Activated CD4-positive, alpha-beta memory T cell treated with anti-CD3 and anti-CD28 coated beads, Interleukin-2, amount 10 ng/mL, durations not matched to agents 7 days and 5 days (primary cell): ENCODE measurements at regions of chr7 and their contacts with region 1.

Region 1: DNA sequence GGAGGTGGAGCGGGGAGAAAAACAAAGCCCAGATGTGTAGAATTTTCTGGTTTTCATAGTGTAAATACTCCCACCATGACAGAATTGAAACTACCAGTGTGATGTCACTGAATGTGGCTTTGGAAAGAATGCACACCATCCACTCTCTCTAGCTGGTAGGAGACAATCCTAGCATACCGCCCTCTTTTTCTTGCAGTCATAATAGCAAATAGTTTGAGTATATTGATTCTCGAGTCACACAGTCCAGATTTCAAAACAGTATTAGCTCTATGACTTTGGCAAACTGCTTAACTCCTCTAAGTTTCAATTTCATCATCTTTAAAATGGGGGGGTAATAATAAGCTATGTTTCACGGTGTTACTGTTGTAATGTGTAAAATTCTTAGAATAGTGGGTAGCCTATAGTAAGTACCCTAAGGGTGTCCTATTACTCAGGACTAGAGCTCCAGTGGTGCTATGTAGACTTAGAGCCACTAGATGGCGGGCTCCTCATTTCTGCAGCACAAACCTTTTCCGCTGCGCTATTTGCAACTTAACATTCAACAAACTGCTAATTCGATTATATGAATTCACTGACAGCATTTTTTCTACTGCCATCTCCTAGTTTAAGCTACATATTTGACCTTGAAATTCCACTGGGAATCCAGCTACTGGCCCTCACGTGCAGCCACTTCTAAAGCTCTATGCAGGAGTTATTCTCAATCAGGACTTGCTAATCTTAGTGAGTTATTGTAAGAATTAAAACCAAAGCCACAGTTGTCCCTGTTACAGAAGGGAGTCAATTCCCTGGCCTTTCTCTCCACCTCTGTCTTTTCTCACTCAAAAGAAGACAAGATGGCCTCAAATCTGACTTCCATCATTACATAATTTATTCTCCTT is 18.7 kb downstream of the TAS2R40 start:
- DNase-seq: peak; percentile 77
- H3K4me3 Mint-ChIP-seq: no peak overlapping the region
- H3K27ac Mint-ChIP-seq: peak overlapping the region; percentile 33
- H3K4me1 Mint-ChIP-seq: peaks cover 52% of the 10 kb centered on the region
- H3K27me3 Mint-ChIP-seq: peaks cover 16% of the 10 kb centered on the region

Region 2: DNA sequence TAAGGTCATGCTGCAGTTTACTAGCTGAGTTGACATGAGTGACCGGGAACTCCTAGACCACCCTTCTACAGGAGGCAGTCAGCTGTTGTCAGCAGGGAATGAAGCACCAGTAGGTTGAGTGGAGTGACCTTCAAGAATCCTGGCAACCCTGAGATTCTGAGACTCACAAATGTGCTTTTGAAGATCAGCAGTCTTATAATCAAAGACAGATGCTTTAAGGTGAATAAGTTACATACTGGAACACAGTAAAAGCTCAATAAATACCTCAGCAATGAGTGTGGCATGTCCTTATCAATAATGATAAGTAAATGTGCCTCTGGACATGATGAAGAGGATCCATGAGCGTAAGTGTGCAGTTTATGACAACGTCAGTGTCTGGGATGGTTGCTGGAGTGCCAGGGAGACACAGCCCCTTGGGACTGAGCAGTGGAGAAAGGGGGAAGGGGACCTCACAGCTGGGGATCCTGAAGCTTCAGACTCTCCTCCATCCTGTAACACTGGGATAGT is 200.3 kb before region 1 on chr7:
- CTCF ChIA-PET with region 1: no interaction called
- POLR2A ChIA-PET with region 1: no interaction called
- DNase-seq: no peak
- H3K4me3 Mint-ChIP-seq: no peak overlapping the region
- H3K27ac Mint-ChIP-seq: no peak overlapping the region
- H3K4me1 Mint-ChIP-seq: no peaks in the 10 kb centered on the region
- H3K27me3 Mint-ChIP-seq: peaks cover 9% of the 10 kb centered on the region

Region 3: GRCh38 chr7:143263266-143264195 is 23.0 kb after region 1 on chr7 and contains the start of gene GSTK1:
- CTCF ChIA-PET with region 1: interaction called, 178 read pairs
- POLR2A ChIA-PET with region 1: interaction called, 51 read pairs
- DNase-seq: peak; percentile 86
- H3K4me3 Mint-ChIP-seq: peak within 1 kb of the TSS; percentile 97
- H3K27ac Mint-ChIP-seq: peak within 1 kb of the TSS; percentile 87
- H3K4me1 Mint-ChIP-seq: peaks cover 73% of the 10 kb centered on the region
- H3K27me3 Mint-ChIP-seq: no peaks in the 10 kb centered on the region
- total RNA-seq, gene GSTK1: 502 to 518 TPM

Region 4: DNA sequence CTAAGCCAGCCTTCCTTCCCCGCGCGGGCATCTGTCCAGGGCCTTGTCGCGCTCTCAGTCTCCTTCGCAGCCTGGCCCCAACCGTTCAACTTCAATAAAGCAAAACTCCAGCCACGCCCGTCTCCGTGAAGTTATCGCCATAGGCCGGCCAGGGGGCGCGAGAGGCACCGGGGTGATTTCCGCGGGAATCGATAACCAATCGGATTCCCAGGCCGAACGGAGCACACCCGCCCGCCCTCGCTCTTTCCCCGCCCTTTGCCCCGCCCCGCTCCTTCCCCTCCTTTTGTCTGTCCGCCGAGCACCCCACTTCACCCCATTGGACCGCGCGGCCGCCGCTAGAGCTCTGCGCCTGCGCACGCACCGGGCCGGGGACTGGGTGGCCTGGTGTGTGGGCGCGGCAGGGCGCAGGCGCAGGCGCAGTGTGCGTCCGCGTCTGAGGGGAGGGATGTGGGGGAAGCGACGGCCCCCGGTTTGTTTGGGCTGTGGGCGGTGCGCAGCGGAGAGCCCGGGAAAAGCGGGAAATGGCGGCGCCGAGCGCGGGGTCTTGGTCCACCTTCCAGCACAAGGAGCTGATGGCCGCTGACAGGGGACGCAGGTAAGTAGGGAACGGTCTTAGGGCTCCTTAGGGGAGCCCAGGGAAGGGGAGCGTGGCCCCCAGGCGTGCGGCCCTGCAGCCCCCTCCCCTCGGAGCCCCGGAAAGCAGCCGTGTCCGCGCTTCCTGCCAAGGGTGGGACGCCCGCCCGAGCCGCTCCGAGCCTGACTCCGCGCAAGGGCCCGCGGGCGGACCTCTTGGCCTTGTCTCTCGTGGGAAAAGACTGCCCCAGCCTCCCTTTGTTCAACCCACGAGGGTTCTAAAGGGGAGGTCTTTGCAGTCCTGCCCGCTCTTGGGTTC is 47.7 kb after region 1 on chr7 and contains the start of gene CASP2:
- CTCF ChIA-PET with region 1: interaction called, 250 read pairs
- POLR2A ChIA-PET with region 1: interaction called, 16 read pairs
- DNase-seq: peak; percentile 99
- H3K4me3 Mint-ChIP-seq: peak within 1 kb of the TSS; percentile 89
- H3K27ac Mint-ChIP-seq: peak within 1 kb of the TSS; percentile 82
- H3K4me1 Mint-ChIP-seq: peaks cover 55% of the 10 kb centered on the region
- H3K27me3 Mint-ChIP-seq: no peaks in the 10 kb centered on the region
- total RNA-seq, gene CASP2: 117 to 122 TPM

Region 5: GRCh38 chr7:143334244-143334643 is 93.7 kb after region 1 on chr7:
- CTCF ChIA-PET with region 1: interaction called, 10 read pairs
- POLR2A ChIA-PET with region 1: no interaction called
- DNase-seq: no peak
- H3K4me3 Mint-ChIP-seq: no peak overlapping the region
- H3K27ac Mint-ChIP-seq: no peak overlapping the region
- H3K4me1 Mint-ChIP-seq: no peaks in the 10 kb centered on the region
- H3K27me3 Mint-ChIP-seq: peaks cover 25% of the 10 kb centered on the region

Region 6: GRCh38 chr7:143380255-143380645 is 139.7 kb after region 1 on chr7:
- CTCF ChIA-PET with region 1: interaction called, 30 read pairs
- POLR2A ChIA-PET with region 1: interaction called, 14 read pairs
- DNase-seq: peak; percentile 90
- H3K4me3 Mint-ChIP-seq: peak overlapping the region; percentile 83
- H3K27ac Mint-ChIP-seq: peak overlapping the region; percentile 91
- H3K4me1 Mint-ChIP-seq: peaks cover 43% of the 10 kb centered on the region
- H3K27me3 Mint-ChIP-seq: no peaks in the 10 kb centered on the region

Region 7: DNA sequence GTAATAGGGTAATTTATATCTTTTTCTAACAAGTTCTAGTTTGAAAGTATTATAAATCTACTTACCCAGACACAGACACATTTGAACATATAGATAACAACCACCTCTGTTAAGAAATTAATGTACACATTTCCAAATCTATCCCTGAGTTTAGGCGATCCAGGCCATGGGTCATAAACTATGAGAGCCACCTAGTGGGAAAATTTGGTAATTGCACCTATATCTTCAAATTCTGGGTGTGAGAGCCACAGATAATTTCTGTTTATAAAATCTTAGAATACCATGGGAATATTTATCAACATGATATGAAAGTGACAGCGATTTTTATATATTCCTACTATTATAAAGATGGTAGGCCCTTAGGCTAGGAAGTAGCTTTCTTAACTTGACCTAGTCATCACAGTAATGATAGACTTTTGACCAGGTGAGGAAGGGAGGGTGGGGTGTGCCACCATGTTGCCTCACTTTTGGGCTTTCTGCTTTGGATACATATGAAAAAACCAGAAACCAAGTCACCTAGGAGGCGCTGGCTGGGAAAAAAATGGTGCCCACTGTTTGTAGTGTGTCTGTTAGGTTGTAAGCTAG is 176.1 kb after region 1 on chr7:
- CTCF ChIA-PET with region 1: interaction called, 57 read pairs
- POLR2A ChIA-PET with region 1: interaction called, 4 read pairs
- DNase-seq: peak; percentile 13
- H3K4me3 Mint-ChIP-seq: no peak overlapping the region
- H3K27ac Mint-ChIP-seq: no peak overlapping the region
- H3K4me1 Mint-ChIP-seq: no peaks in the 10 kb centered on the region
- H3K27me3 Mint-ChIP-seq: peaks cover 3% of the 10 kb centered on the region